ENCODE measurements at regions of chr11 and their contacts with region 1.

Region 1: GRCh38 chr11:102495161-102496042 is 35.1 kb downstream of the MMP7 start:
- DNase-seq: peak; percentile 70
- H3K4me3 ChIP-seq: no peak overlapping the region
- H3K27ac ChIP-seq: no peak overlapping the region
- H3K4me1 ChIP-seq: peaks cover 17% of the 10 kb centered on the region
- H3K27me3 ChIP-seq: no peaks in the 10 kb centered on the region
- CTCF ChIP-seq: peak; percentile 54 to 55

Region 2: DNA sequence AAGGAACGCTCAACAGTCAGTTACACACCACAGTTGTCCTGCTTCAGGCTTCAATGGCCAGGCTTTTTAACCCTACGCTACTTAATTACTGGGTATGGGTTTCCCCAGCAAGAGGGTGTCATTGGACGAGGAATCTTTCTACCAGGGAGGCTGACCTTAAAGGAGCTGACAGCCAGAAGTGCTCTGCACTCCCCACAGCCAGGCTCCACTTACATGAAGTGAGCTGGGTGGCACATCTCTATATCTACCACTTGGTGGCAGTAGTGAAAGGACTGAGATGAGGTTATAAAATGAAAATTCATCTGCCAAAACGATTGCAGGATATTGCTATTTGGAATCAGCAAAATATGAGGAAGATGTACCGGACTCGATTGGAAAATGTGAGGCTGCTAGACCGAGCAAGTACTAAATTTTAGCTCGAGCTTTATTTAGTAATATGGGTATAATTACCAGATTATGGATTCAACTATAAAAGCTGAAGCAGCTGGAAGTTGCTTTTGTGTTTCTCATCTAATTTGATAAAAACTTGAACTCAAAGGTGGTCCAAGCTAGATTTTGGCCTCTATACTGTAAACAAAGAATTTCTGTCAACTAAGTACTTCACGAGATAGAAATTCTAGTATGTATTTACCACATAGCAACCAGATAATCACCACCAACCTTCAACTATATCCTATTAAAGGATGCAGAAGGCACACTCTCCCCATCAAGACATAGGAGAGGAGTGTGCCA is 634.5 kb before region 1 on chr11:
- CTCF ChIA-PET with region 1: no interaction called
- dilution Hi-C with region 1: no loop called
- in situ Hi-C with region 1: no loop called
- intact Hi-C with region 1: loop called (anchors 5 kb)
- DNase-seq: peak; percentile 36
- H3K4me3 ChIP-seq: no peak overlapping the region
- H3K27ac ChIP-seq: no peak overlapping the region
- H3K4me1 ChIP-seq: peaks cover 13% of the 10 kb centered on the region
- H3K27me3 ChIP-seq: no peaks in the 10 kb centered on the region
- CTCF ChIP-seq: peak; percentile 82 to 84

Region 3: GRCh38 chr11:102341844-102342318 is 153.5 kb before region 1 on chr11:
- CTCF ChIA-PET with region 1: interaction called, 4 read pairs
- dilution Hi-C with region 1: loop called (anchors 5 kb)
- in situ Hi-C with region 1: no loop called
- intact Hi-C with region 1: loop called (anchors 1 kb)
- DNase-seq: peak; percentile 72
- H3K4me3 ChIP-seq: no peak overlapping the region
- H3K27ac ChIP-seq: no peak overlapping the region
- H3K4me1 ChIP-seq: peaks cover 12% of the 10 kb centered on the region
- H3K27me3 ChIP-seq: no peaks in the 10 kb centered on the region
- CTCF ChIP-seq: peak; percentile 79 to 85

Region 4: GRCh38 chr11:102367364-102367763 is 128.0 kb before region 1 on chr11:
- CTCF ChIA-PET with region 1: no interaction called
- dilution Hi-C with region 1: no loop called
- in situ Hi-C with region 1: no loop called
- intact Hi-C with region 1: loop called (anchors 1 kb)
- DNase-seq: no peak
- H3K4me3 ChIP-seq: no peak overlapping the region
- H3K27ac ChIP-seq: no peak overlapping the region
- H3K4me1 ChIP-seq: no peaks in the 10 kb centered on the region
- H3K27me3 ChIP-seq: no peaks in the 10 kb centered on the region
- CTCF ChIP-seq: peak in 1 of 2 donors; percentile 4

Region 5: DNA sequence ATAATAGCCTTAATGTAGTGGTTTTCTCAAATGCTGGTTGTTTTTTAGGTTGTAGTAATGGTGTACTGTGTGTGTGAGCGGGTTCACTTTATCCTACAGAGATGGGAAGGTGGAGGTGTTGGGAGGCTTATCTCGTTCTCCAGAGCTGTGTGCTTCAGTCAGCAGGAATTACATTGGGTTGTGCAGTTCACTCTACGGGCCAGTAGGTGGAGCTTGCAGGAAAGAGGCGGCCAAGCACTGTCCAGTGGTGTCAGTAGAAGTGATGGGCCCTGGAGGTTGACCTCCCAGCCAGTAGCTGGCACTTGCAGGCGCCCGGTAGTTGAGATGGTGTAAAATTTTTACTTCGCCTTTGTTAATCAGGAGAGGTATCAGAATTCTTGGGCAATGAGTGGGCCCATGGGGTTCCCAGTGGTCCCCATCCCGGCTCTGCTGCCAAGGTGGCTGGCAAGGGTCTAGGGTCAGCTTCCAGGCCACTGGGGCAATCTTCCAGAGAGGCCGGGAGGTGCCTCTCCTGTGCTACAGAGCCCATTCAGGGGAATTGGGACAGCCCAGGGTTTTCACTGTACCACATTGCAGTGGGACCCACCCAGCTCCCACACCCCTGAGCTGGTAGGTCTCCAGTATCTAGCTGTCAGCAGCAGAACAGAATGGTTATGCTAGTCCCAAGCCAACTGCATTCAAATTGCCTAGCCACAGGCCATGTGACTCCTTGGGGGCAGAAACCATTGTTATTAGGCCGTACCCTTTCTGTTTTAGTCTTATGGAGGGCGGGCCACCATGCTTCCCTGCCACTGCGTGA is 104.5 kb before region 1 on chr11:
- CTCF ChIA-PET with region 1: no interaction called
- dilution Hi-C with region 1: no loop called
- in situ Hi-C with region 1: loop called (anchors 5 to 25 kb)
- intact Hi-C with region 1: loop called (anchors 1 kb)
- DNase-seq: peak; percentile 50
- H3K4me3 ChIP-seq: no peak overlapping the region
- H3K27ac ChIP-seq: no peak overlapping the region
- H3K4me1 ChIP-seq: no peaks in the 10 kb centered on the region
- H3K27me3 ChIP-seq: no peaks in the 10 kb centered on the region
- CTCF ChIP-seq: peak; percentile 88 to 92

Region 6: GRCh38 chr11:102530558-102530957 is 35.2 kb after region 1 on chr11 and contains the start of gene MMP7:
- CTCF ChIA-PET with region 1: no interaction called
- dilution Hi-C with region 1: no loop called
- in situ Hi-C with region 1: no loop called
- intact Hi-C with region 1: no loop called
- DNase-seq: peak; percentile 68
- H3K4me3 ChIP-seq: peak within 1 kb of the TSS in 1 of 3 experiments; percentile 4
- H3K27ac ChIP-seq: peak within 1 kb of the TSS; percentile 32
- H3K4me1 ChIP-seq: peaks cover 12% of the 10 kb centered on the region
- H3K27me3 ChIP-seq: no peaks in the 10 kb centered on the region
- CTCF ChIP-seq: no peak
- total RNA-seq, gene MMP7: 13.8 TPM in 1 of 2 donors, not detected in the other

Region 7: DNA sequence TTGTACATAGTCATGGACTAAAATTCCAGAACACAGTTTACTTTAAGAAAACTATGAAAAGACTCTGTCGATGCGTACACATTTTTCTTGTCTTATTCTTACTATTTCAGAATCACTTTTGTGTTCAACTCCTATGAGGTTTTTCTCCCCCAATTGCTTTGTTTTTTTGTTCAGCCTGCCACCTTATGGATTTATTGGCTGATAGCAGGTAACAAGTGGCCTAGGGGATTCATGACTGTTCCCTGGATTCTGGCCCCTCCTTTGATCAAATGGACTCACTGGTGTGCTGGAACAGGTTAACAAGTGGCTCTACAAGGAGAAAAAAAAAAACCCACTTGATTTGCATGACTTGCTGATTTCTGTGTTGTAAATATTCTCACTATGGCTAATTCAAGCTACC is 119.1 kb after region 1 on chr11:
- CTCF ChIA-PET with region 1: interaction called, 3 read pairs
- dilution Hi-C with region 1: no loop called
- in situ Hi-C with region 1: loop called in 1 of 2 experiments (anchors 10 kb)
- intact Hi-C with region 1: loop called (anchors 1 kb)
- DNase-seq: no peak
- H3K4me3 ChIP-seq: no peak overlapping the region
- H3K27ac ChIP-seq: no peak overlapping the region
- H3K4me1 ChIP-seq: no peaks in the 10 kb centered on the region
- H3K27me3 ChIP-seq: no peaks in the 10 kb centered on the region
- CTCF ChIP-seq: peak; percentile 5 to 34

Region 8: GRCh38 chr11:102709201-102709945 is 214.0 kb after region 1 on chr11:
- CTCF ChIA-PET with region 1: no interaction called
- dilution Hi-C with region 1: no loop called
- in situ Hi-C with region 1: no loop called
- intact Hi-C with region 1: no loop called
- DNase-seq: peak; percentile 18
- H3K4me3 ChIP-seq: no peak overlapping the region
- H3K27ac ChIP-seq: no peak overlapping the region
- H3K4me1 ChIP-seq: peaks cover 3% of the 10 kb centered on the region
- H3K27me3 ChIP-seq: no peaks in the 10 kb centered on the region
- CTCF ChIP-seq: no peak

Measured in mammary epithelial cell (primary cell).